Esophagus squamous epithelium (tissue), 5 donors: ENCODE measurements at regions of chr11 and their contacts with region 1.

Region 1: DNA sequence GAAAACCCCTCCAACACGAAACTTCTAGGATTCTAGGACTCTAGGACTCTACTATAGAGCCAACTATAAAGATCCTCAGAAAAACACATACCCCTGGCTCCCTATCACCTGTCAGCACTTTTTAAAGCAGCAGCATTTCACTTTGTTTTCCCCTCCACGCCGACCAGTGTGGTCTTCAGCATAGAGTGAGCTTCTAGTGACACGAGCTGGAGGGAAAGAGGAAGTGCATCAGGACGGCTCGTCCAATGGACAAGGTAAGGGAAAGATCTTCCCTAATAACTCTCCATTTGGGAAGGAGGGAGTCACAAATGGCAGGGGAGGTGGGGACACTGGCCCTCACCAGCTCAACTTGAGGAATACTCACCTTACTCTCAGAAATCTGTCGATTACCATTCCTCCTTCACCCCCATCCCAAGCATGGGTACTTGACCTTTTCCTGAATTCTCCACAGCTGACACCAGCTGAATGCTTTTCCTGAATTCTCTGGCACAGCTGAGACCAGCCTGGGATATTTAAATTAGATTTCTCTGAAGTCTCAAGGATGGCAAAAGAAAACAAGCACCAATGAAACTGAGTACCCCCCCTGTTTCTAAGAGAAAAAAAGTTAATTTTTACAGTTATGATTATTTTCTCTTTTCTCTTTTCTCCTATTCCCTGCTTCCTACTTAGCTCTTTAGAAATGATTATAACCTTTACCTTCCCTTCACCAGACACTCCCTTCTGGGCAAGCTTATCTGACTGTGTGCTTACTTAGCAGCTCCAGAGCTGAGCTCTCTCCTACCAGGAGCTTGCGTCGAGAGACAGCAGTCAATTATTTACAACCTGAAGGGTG is 33.3 kb upstream of the NNMT start:
- DNase-seq: no peak
- H3K4me3 ChIP-seq: no peak overlapping the region
- H3K27ac ChIP-seq: no peak overlapping the region
- H3K4me1 ChIP-seq: peaks cover 13 to 36% (median 26%) of the 10 kb centered on the region in 3 donors
- H3K27me3 ChIP-seq: peaks cover 0 to 3% (median 0%) of the 10 kb centered on the region in 4 donors
- CTCF ChIP-seq: peak in 4 of 6 experiments; percentile 50 to 60 (median 56)
- POLR2A ChIP-seq: peak in 1 of 4 donors; percentile 7

Region 2: GRCh38 chr11:113994077-113994954 is 268.6 kb before region 1 on chr11:
- intact Hi-C with region 1: loop called (anchors 10 kb)
- DNase-seq: no peak
- H3K4me3 ChIP-seq: no peak overlapping the region
- H3K27ac ChIP-seq: no peak overlapping the region
- H3K4me1 ChIP-seq: no peaks in the 10 kb centered on the region
- H3K27me3 ChIP-seq: peaks cover 0 to 72% (median 0%) of the 10 kb centered on the region in 4 donors
- CTCF ChIP-seq: peak; percentile 50 to 69 (median 63)
- POLR2A ChIP-seq: no peak

Region 3: DNA sequence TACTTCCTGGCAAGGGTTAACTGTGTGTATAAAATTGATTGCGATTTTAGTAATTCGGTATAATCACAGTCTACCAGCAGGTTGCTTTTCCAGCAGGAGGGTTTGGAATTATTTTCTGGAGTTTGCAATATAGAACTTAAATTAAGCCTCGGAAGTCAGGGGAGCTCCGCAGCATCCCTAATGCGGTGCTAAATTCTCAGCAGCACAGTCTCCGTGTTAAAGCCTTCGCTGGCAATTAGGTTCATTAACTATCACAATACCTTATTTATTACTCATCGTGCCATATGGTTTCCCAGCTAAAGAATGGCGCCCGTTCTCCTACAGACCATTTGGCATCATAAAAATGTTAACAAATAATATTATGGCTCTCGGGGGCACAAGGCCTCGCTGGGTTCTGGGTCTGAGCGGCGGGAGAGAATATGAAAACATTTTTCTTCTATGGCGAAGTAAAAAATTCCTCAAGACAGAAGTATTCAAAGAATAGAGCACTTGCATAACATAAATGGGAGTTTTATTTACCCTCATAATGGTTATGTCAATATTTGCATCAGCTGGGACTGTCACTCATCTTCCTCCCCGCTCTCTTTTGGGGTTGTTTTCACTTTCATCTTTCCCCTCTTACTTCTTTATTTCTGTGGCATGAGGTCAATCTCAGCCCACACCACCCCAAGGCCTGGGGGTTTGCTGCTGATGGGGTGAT is 231.5 kb before region 1 on chr11:
- intact Hi-C with region 1: loop called (anchors 5 kb)
- DNase-seq: no peak
- H3K4me3 ChIP-seq: no peak overlapping the region
- H3K27ac ChIP-seq: no peak overlapping the region
- H3K4me1 ChIP-seq: peaks cover 0 to 9% (median 6%) of the 10 kb centered on the region in 3 donors
- H3K27me3 ChIP-seq: peaks cover 0 to 47% (median 1%) of the 10 kb centered on the region in 4 donors
- CTCF ChIP-seq: no peak
- POLR2A ChIP-seq: no peak